ENCODE measurements at regions of chr4 and their contacts with region 1.

Region 1: DNA sequence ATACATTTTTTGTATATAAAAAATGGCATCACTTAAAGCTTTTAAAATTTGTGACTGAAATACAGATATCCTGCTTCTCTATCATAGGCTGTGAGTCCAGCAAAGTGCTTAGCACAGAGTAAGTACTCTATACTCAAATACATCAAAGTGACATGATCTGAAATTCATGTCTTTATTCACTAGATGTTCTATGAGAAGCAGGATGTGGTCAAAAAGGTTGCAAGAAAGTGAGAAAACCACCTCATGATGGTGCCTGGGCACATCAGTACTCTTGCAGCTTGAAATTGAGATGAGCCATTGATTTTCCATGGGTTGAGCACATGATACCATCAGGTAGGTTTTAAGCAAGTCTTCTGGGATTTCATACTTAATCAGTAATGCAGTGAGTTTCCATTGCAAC is 20.4 kb upstream of the SFRP2 start:
- DNase-seq: peak; percentile 63
- ATAC-seq: peak; percentile 88
- H3K4me3 Mint-ChIP-seq: no peak overlapping the region
- H3K27ac Mint-ChIP-seq: peak overlapping the region; percentile 50
- H3K4me1 Mint-ChIP-seq: peaks cover 28% of the 10 kb centered on the region
- H3K27me3 Mint-ChIP-seq: peaks cover 4% of the 10 kb centered on the region
- CTCF ChIP-seq: no peak

Region 2: GRCh38 chr4:153791746-153792617 is 17.3 kb before region 1 on chr4:
- CTCF ChIA-PET with region 1: interaction called, 3 read pairs
- POLR2A ChIA-PET with region 1: no interaction called
- intact Hi-C with region 1: loop called (anchors 2 kb)
- DNase-seq: peak; percentile 73
- ATAC-seq: peak; percentile 35
- H3K4me3 Mint-ChIP-seq: peak overlapping the region; percentile 52
- H3K27ac Mint-ChIP-seq: no peak overlapping the region
- H3K4me1 Mint-ChIP-seq: peaks cover 41% of the 10 kb centered on the region
- H3K27me3 Mint-ChIP-seq: peaks cover 71% of the 10 kb centered on the region
- CTCF ChIP-seq: peak; percentile 26

Region 3: DNA sequence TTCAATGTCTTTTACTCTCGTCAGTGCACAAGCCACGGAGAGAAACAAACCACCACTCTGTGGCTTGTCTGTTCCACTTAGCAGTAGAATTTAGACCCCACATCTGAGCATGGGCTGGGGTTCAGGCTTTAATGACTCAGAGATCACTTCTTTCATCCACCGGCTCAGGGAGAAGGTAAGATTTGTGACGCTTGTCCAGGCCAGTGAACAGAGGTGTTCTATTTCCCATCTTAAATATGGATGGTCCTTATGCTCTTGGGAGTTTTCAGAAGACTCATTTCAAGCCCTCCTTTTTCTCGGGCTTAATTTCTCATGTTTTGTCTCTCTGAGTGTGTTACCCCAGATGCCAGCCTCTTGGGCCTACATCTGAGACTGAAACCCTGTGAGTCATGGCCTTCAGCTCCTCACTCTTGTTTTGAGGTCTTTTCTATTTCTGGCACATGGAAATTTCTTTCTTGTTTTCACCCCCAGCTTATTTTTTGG is 107.0 kb after region 1 on chr4:
- CTCF ChIA-PET with region 1: no interaction called
- POLR2A ChIA-PET with region 1: no interaction called
- intact Hi-C with region 1: loop called (anchors 10 kb)
- DNase-seq: peak; percentile 81
- ATAC-seq: peak; percentile 90
- H3K4me3 Mint-ChIP-seq: no peak overlapping the region
- H3K27ac Mint-ChIP-seq: peak overlapping the region; percentile 84
- H3K4me1 Mint-ChIP-seq: peaks cover 26% of the 10 kb centered on the region
- H3K27me3 Mint-ChIP-seq: peaks cover 27% of the 10 kb centered on the region
- CTCF ChIP-seq: no peak